Activated CD8-positive, alpha-beta memory T cell treated with anti-CD3 and anti-CD28 coated beads, Interleukin-2, amount 10 ng/mL, durations not matched to agents 7 days and 5 days (primary cell): ENCODE measurements at regions of chr17 and their contacts with region 1.

Region 1: GRCh38 chr17:39794249-39794970 is 56.7 kb downstream of the GRB7 start:
- DNase-seq: peak; percentile 60
- ATAC-seq: peak; percentile 48
- H3K4me3 Mint-ChIP-seq: peak overlapping the region; percentile 31
- H3K27ac Mint-ChIP-seq: peak overlapping the region; percentile 86
- H3K4me1 Mint-ChIP-seq: peaks cover 64% of the 10 kb centered on the region
- H3K27me3 Mint-ChIP-seq: no peaks in the 10 kb centered on the region

Region 2: GRCh38 chr17:39563476-39563875 is 230.9 kb before region 1 on chr17:
- CTCF ChIA-PET with region 1: no interaction called
- DNase-seq: no peak
- ATAC-seq: no peak
- H3K4me3 Mint-ChIP-seq: no peak overlapping the region
- H3K27ac Mint-ChIP-seq: no peak overlapping the region
- H3K4me1 Mint-ChIP-seq: no peaks in the 10 kb centered on the region
- H3K27me3 Mint-ChIP-seq: no peaks in the 10 kb centered on the region

Region 3: GRCh38 chr17:39777534-39778365 is 16.7 kb before region 1 on chr17:
- CTCF ChIA-PET with region 1: interaction called, 32 read pairs
- DNase-seq: no peak
- ATAC-seq: peak; percentile 50
- H3K4me3 Mint-ChIP-seq: peak overlapping the region; percentile 89
- H3K27ac Mint-ChIP-seq: peak overlapping the region; percentile 92
- H3K4me1 Mint-ChIP-seq: peaks cover 81% of the 10 kb centered on the region
- H3K27me3 Mint-ChIP-seq: no peaks in the 10 kb centered on the region

Region 4: GRCh38 chr17:39826334-39826733 is 31.9 kb after region 1 on chr17:
- CTCF ChIA-PET with region 1: no interaction called
- DNase-seq: no peak
- ATAC-seq: no peak
- H3K4me3 Mint-ChIP-seq: no peak overlapping the region
- H3K27ac Mint-ChIP-seq: no peak overlapping the region
- H3K4me1 Mint-ChIP-seq: peaks cover 27% of the 10 kb centered on the region
- H3K27me3 Mint-ChIP-seq: no peaks in the 10 kb centered on the region

Region 5: GRCh38 chr17:39863918-39864746 is 69.7 kb after region 1 on chr17 and contains the start of gene IKZF3:
- CTCF ChIA-PET with region 1: interaction called, 11 read pairs
- DNase-seq: peak; percentile 87
- ATAC-seq: peak; percentile 60
- H3K4me3 Mint-ChIP-seq: peak within 1 kb of the TSS; percentile 81
- H3K27ac Mint-ChIP-seq: peak within 1 kb of the TSS; percentile 94
- H3K4me1 Mint-ChIP-seq: peaks cover 58% of the 10 kb centered on the region
- H3K27me3 Mint-ChIP-seq: peaks cover 4% of the 10 kb centered on the region
- total RNA-seq, gene IKZF3: 70.8 to 119 TPM